CD8-positive, alpha-beta T cell (primary cell): ENCODE measurements at regions of chr11 and their contacts with region 1.

Region 1: GRCh38 chr11:75142714-75143419 is 8.0 kb upstream of the SLCO2B1 start:
- DNase-seq: peak in 8 of 9 experiments; percentile 58 to 87 (median 76)
- ATAC-seq: peak; percentile 89
- H3K4me3 ChIP-seq: no peak overlapping the region
- H3K4me3 Mint-ChIP-seq: peak overlapping the region; percentile 41
- H3K27ac ChIP-seq: peak overlapping the region in 1 of 2 experiments; percentile 43
- H3K27ac Mint-ChIP-seq: peak overlapping the region; percentile 79
- H3K4me1 ChIP-seq: peaks cover 30% of the 10 kb centered on the region
- H3K4me1 Mint-ChIP-seq: peaks cover 36% of the 10 kb centered on the region
- H3K27me3 ChIP-seq: no peaks in the 10 kb centered on the region
- H3K27me3 Mint-ChIP-seq: no peaks in the 10 kb centered on the region
- CTCF ChIP-seq: no peak

Region 2: GRCh38 chr11:73856031-73856567 is 1286.8 kb before region 1 on chr11:
- CTCF ChIA-PET with region 1: no interaction called
- POLR2A ChIA-PET with region 1: no interaction called
- intact Hi-C with region 1: no loop called
- DNase-seq: no peak
- ATAC-seq: no peak
- H3K4me3 ChIP-seq: no peak overlapping the region
- H3K4me3 Mint-ChIP-seq: no peak overlapping the region
- H3K27ac ChIP-seq: no peak overlapping the region
- H3K27ac Mint-ChIP-seq: no peak overlapping the region
- H3K4me1 ChIP-seq: no peaks in the 10 kb centered on the region
- H3K4me1 Mint-ChIP-seq: no peaks in the 10 kb centered on the region
- H3K27me3 ChIP-seq: no peaks in the 10 kb centered on the region
- H3K27me3 Mint-ChIP-seq: no peaks in the 10 kb centered on the region
- CTCF ChIP-seq: no peak

Region 3: DNA sequence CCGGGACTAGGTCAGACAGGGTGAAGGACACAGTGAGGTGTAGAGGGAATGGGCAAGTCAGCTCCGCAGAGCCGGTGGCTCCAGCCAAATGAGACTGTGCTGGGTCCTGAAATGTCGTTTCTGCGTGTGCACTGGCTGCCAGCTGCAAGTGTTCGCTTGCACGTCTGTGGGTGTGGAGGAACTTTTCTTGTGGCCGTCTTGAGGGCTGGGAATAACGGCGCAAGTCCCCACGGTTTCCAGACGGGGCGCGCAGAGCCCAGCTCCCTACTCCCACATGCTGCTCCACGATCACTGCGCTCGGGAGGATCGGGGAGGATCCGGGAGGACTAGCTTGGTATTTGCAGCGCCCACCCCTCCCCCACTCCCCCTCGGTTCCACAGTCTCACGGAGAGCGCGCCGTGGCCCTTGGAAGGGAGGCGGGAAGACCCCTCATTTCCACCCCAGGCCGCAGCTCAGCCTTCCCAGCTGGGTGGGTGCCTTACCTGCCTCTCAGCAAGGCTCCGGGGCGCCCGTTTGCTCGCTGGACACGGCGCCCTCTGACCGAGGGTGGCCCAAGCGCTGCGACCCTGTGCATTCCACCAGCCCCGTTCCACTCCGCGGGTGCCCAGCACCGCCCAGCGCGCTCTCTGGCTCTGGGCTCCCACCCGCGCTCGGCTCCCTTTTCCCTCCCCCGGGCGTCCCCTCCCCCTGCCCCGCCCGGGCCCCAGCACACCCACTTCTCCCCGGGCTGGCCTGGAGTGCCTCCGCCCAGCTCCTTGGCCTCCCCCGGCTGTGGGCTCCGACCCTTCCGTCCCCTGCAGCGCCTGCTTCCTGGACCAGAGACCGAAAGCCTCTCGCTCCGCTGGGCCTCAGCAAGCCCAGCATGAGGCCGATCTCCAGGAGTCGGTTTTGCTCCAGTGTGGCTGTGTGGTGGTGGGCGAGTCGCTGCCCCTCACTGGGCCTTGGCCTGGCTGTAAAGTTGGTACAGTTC is 675.7 kb before region 1 on chr11 and contains the start of gene KCNE3:
- CTCF ChIA-PET with region 1: no interaction called
- POLR2A ChIA-PET with region 1: no interaction called
- intact Hi-C with region 1: no loop called
- DNase-seq: no peak
- ATAC-seq: no peak
- H3K4me3 ChIP-seq: no peak within 1 kb of the TSS
- H3K4me3 Mint-ChIP-seq: no peak within 1 kb of the TSS
- H3K27ac ChIP-seq: no peak within 1 kb of the TSS
- H3K27ac Mint-ChIP-seq: no peak within 1 kb of the TSS
- H3K4me1 ChIP-seq: no peaks in the 10 kb centered on the region
- H3K4me1 Mint-ChIP-seq: peaks cover 3% of the 10 kb centered on the region
- H3K27me3 ChIP-seq: peaks cover 8 to 19% of the 10 kb centered on the region in 2 experiments
- H3K27me3 Mint-ChIP-seq: peaks cover 44% of the 10 kb centered on the region
- CTCF ChIP-seq: no peak
- total RNA-seq, gene KCNE3: not detected

Region 4: DNA sequence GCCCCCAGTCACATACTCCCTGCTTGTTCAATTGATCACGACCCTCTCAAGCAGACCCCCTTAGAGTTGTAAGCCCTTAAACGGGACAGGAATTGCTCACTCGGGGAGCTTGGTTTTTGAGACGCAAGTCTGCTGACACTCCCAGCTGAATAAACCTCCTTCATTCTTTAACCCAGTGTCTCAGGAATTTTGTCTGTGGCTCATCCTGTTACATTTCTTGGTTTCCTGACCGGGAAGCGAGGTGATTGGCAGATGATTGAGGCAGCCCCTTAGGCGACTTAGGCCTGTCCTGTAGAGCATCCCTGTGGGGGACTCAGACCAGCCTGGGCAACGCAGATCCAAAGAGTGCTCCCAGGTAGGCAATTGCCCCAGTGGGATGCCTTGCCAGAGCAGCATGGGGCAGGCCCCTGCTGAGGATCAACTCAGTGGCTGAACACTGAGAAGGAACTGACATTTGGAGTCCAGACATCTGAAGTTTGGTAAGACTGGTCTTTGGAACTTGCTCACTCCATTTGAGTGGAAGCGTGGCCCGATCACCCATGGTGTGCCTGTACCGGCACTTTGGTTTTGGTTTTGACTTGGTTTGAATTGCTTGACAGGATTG is 102.6 kb before region 1 on chr11:
- CTCF ChIA-PET with region 1: no interaction called
- POLR2A ChIA-PET with region 1: no interaction called
- intact Hi-C with region 1: no loop called
- DNase-seq: no peak
- ATAC-seq: no peak
- H3K4me3 ChIP-seq: no peak overlapping the region
- H3K4me3 Mint-ChIP-seq: no peak overlapping the region
- H3K27ac ChIP-seq: no peak overlapping the region
- H3K27ac Mint-ChIP-seq: no peak overlapping the region
- H3K4me1 ChIP-seq: no peaks in the 10 kb centered on the region
- H3K4me1 Mint-ChIP-seq: no peaks in the 10 kb centered on the region
- H3K27me3 ChIP-seq: no peaks in the 10 kb centered on the region
- H3K27me3 Mint-ChIP-seq: no peaks in the 10 kb centered on the region
- CTCF ChIP-seq: no peak

Region 5: DNA sequence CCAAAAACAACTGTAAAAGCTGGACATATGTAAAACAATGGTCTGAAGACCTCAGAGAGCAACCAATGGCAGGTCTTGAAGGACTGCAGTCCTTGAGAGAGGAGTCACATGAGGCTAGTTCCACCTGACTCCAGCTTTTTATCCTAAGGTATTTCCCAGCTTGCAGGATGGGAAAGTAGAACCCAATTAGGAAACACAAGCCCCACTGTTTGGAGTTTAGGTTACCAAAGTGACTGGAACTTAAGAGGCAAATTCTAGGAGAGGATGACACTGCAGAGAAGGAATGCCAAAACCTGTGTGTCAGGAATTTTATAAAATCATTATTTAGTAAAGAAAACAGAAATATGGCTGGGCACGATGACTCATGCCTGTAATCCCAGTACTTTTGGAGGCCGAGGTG is 64.6 kb before region 1 on chr11:
- CTCF ChIA-PET with region 1: no interaction called
- POLR2A ChIA-PET with region 1: no interaction called
- intact Hi-C with region 1: no loop called
- DNase-seq: no peak
- ATAC-seq: no peak
- H3K4me3 ChIP-seq: no peak overlapping the region
- H3K4me3 Mint-ChIP-seq: no peak overlapping the region
- H3K27ac ChIP-seq: no peak overlapping the region
- H3K27ac Mint-ChIP-seq: no peak overlapping the region
- H3K4me1 ChIP-seq: no peaks in the 10 kb centered on the region
- H3K4me1 Mint-ChIP-seq: no peaks in the 10 kb centered on the region
- H3K27me3 ChIP-seq: no peaks in the 10 kb centered on the region
- H3K27me3 Mint-ChIP-seq: peaks cover 31% of the 10 kb centered on the region
- CTCF ChIP-seq: no peak

Region 6: GRCh38 chr11:75167617-75168016 is 24.8 kb after region 1 on chr11:
- CTCF ChIA-PET with region 1: interaction called, 11 read pairs
- POLR2A ChIA-PET with region 1: interaction called, 4 read pairs
- intact Hi-C with region 1: no loop called
- DNase-seq: no peak
- ATAC-seq: no peak
- H3K4me3 ChIP-seq: no peak overlapping the region
- H3K4me3 Mint-ChIP-seq: no peak overlapping the region
- H3K27ac ChIP-seq: no peak overlapping the region
- H3K27ac Mint-ChIP-seq: no peak overlapping the region
- H3K4me1 ChIP-seq: no peaks in the 10 kb centered on the region
- H3K4me1 Mint-ChIP-seq: no peaks in the 10 kb centered on the region
- H3K27me3 ChIP-seq: no peaks in the 10 kb centered on the region
- H3K27me3 Mint-ChIP-seq: no peaks in the 10 kb centered on the region
- CTCF ChIP-seq: no peak

Region 7: GRCh38 chr11:75204685-75205563 is 62.1 kb after region 1 on chr11:
- CTCF ChIA-PET with region 1: interaction called, 313 read pairs
- POLR2A ChIA-PET with region 1: interaction called, 4 read pairs
- intact Hi-C with region 1: loop called (anchors 1 kb)
- DNase-seq: peak; percentile 58 to 89 (median 79)
- ATAC-seq: peak; percentile 71
- H3K4me3 ChIP-seq: no peak overlapping the region
- H3K4me3 Mint-ChIP-seq: no peak overlapping the region
- H3K27ac ChIP-seq: no peak overlapping the region
- H3K27ac Mint-ChIP-seq: no peak overlapping the region
- H3K4me1 ChIP-seq: no peaks in the 10 kb centered on the region
- H3K4me1 Mint-ChIP-seq: no peaks in the 10 kb centered on the region
- H3K27me3 ChIP-seq: no peaks in the 10 kb centered on the region
- H3K27me3 Mint-ChIP-seq: peaks cover 3% of the 10 kb centered on the region
- CTCF ChIP-seq: peak; percentile 82

Region 8: DNA sequence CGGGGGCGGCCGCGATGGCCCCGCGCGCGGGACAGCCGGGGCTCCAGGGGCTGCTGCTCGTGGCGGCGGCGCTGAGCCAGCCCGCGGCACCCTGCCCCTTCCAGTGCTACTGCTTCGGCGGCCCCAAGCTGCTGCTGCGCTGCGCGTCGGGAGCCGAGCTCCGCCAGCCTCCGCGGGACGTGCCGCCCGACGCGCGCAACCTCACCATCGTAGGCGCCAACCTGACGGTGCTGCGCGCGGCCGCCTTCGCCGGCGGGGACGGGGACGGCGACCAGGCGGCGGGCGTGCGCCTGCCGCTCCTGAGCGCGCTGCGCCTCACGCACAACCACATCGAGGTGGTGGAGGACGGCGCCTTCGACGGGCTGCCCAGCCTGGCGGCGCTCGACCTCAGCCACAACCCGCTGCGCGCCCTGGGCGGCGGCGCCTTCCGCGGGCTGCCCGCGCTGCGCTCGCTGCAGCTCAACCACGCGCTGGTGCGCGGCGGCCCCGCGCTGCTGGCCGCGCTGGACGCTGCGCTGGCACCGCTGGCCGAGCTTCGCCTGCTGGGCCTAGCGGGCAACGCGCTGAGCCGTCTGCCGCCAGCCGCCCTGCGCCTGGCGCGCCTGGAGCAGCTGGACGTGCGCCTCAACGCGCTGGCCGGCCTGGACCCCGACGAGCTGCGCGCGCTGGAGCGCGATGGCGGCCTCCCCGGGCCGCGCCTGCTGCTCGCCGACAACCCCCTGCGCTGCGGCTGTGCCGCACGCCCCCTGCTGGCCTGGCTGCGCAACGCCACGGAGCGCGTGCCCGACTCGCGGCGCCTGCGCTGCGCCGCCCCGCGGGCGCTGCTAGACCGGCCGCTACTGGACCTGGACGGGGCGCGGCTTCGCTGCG is 98.4 kb after region 1 on chr11:
- CTCF ChIA-PET with region 1: interaction called, 625 read pairs
- POLR2A ChIA-PET with region 1: interaction called, 14 read pairs
- intact Hi-C with region 1: loop called (anchors 1 to 2 kb)
- DNase-seq: peak; percentile 77 to 91 (median 83)
- ATAC-seq: peak; percentile 93
- H3K4me3 ChIP-seq: peak overlapping the region; percentile 31 to 61
- H3K4me3 Mint-ChIP-seq: peak overlapping the region; percentile 79
- H3K27ac ChIP-seq: no peak overlapping the region
- H3K27ac Mint-ChIP-seq: no peak overlapping the region
- H3K4me1 ChIP-seq: peaks cover 9% of the 10 kb centered on the region
- H3K4me1 Mint-ChIP-seq: peaks cover 10% of the 10 kb centered on the region
- H3K27me3 ChIP-seq: peaks cover 17 to 20% of the 10 kb centered on the region in 2 experiments
- H3K27me3 Mint-ChIP-seq: peaks cover 49% of the 10 kb centered on the region
- CTCF ChIP-seq: peak; percentile 77

Region 9: GRCh38 chr11:75263944-75264349 is 121.1 kb after region 1 on chr11:
- CTCF ChIA-PET with region 1: interaction called, 177 read pairs
- POLR2A ChIA-PET with region 1: interaction called, 3 read pairs
- intact Hi-C with region 1: no loop called
- DNase-seq: peak in 4 of 9 experiments; percentile 33 to 55 (median 42)
- ATAC-seq: no peak
- H3K4me3 ChIP-seq: no peak overlapping the region
- H3K4me3 Mint-ChIP-seq: no peak overlapping the region
- H3K27ac ChIP-seq: peak overlapping the region in 1 of 2 experiments; percentile 64
- H3K27ac Mint-ChIP-seq: peak overlapping the region; percentile 74
- H3K4me1 ChIP-seq: peaks cover 55% of the 10 kb centered on the region
- H3K4me1 Mint-ChIP-seq: peaks cover 49% of the 10 kb centered on the region
- H3K27me3 ChIP-seq: no peaks in the 10 kb centered on the region
- H3K27me3 Mint-ChIP-seq: no peaks in the 10 kb centered on the region
- CTCF ChIP-seq: no peak

Region 10: DNA sequence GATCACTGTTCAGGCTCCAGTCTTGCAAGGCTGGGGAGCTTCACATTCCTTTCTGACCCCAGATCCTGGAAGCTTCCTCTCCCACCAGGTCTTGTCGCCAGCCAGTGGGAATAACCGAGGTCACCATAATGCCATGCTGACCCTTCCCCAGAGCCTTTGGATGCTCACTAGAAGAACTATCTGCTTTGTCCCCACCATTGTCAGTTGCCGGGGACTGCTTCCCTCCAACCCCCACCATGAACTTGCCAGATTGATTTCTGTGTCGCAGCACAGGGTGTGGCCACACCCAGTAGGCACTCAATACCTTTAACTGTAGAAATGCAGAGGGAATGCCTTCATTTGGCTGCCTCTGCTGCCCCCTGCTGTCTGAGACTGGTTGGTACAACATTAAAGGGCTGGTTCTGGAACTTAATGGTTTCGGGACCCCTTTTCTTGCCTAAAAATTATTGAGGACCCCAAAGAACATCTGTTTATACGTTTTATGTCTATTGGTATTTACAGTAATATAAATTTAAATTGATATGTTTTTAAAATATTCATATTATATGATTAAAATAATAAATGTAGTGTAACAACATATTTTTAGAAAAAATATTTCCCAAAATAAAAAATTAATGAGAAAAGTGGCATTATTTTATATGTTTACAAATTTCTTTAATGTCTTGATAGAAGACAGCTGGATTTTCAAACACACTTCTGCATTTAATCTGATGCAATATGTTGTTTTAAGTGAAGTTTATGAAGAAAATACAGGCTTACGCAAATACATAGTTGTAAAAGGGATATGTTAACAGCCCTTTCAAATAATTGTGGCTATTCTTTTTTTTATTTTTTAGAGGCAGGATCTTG is 389.6 kb after region 1 on chr11:
- CTCF ChIA-PET with region 1: no interaction called
- POLR2A ChIA-PET with region 1: no interaction called
- intact Hi-C with region 1: loop called in 1 of 2 experiments (anchors 5 kb)
- DNase-seq: peak; percentile 70 to 91 (median 84)
- ATAC-seq: peak; percentile 91
- H3K4me3 ChIP-seq: no peak overlapping the region
- H3K4me3 Mint-ChIP-seq: no peak overlapping the region
- H3K27ac ChIP-seq: no peak overlapping the region
- H3K27ac Mint-ChIP-seq: no peak overlapping the region
- H3K4me1 ChIP-seq: peaks cover 8% of the 10 kb centered on the region
- H3K4me1 Mint-ChIP-seq: peaks cover 31% of the 10 kb centered on the region
- H3K27me3 ChIP-seq: no peaks in the 10 kb centered on the region
- H3K27me3 Mint-ChIP-seq: no peaks in the 10 kb centered on the region
- CTCF ChIP-seq: peak; percentile 98